Vagina (tissue), 2 donors: ENCODE measurements at regions of chr20 and their contacts with region 1.

Region 1: DNA sequence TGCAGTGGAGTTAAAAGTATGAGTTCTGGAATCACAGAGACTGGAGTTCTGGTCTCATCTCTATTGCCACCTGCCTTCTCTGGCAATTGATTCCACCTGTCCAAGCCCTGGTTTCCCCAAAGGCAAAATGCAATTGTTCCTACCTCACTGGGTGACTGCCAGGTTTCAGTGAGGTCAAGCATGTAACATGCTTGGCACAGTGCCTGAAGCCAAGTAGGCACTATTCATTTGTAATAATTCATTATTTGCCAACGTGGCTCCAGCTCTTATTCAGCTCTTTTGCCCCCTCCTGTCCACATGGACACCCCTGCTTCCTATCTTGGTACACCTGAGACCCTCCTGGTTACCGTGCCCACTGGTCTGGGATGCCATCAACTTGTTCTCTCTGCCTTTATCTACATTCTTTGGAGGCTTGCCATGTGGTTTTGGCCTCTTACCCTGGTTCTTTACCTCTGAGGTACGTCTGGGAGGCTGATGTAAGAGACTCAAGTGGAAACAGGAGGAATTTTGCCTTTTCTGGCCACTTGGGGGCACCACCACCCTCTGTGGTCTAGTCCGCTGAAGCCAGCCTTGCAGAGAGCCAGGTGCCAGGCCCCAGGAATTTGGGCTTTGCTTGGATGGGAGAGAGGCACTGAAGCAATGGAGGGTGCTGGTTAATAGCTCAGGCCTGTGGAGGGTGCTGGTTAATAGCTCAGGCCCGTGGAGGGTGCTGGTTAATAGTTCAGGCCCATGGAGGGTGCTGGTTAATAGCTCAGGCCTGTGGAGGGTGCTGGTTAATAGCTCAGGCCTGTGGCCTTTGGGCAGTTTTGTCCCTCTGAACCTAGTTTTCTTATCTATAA is 1.7 kb downstream of the KCNK15 start:
- DNase-seq: no peak
- H3K4me3 ChIP-seq: no peak overlapping the region
- H3K27ac ChIP-seq: no peak overlapping the region
- H3K4me1 ChIP-seq: peaks cover 27% of the 10 kb centered on the region
- H3K27me3 ChIP-seq: no peaks in the 10 kb centered on the region
- CTCF ChIP-seq: peak in 2 of 3 experiments; percentile 55 to 71
- POLR2A ChIP-seq: no peak

Region 2: DNA sequence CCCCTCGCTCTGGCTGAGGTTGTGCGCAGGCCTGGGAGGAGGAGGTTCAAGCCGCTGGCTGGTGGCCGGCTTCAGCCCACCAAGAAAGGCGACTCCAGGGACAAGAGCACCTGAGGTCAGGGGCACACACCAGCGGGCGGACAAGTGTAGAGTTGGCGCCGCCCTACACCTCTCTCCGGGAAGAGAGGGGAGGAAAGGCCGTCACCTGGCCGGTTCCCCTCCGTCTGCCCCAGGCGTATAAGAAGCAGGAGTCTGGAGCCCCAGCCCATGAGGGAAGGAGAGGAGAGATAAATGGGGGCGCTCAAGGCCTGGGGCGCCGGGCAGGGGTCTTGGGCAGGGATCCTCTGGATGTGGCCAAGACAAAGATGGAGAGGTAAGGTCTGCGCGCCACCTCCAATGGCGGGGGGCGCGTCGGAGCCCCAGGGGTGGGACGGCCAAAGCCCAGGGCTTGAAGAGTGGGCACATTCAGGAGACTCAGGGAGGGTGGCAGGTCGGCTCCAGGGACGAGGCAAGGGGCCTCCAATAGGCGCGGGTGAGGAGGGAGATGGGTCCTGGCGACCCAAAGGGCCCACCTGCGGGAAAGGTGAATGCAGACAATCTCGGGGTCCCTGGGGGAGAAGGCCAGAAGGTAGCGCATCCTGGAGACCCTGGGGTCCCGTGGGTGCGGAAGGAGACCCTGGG is 62.1 kb after region 1 on chr20:
- intact Hi-C with region 1: loop called (anchors 2 kb)
- DNase-seq: no peak
- H3K4me3 ChIP-seq: peak overlapping the region; percentile 39 to 45
- H3K27ac ChIP-seq: peak overlapping the region; percentile 68
- H3K4me1 ChIP-seq: peaks cover 5% of the 10 kb centered on the region
- H3K27me3 ChIP-seq: peaks cover 5% of the 10 kb centered on the region
- CTCF ChIP-seq: no peak
- POLR2A ChIP-seq: no peak

Region 3: DNA sequence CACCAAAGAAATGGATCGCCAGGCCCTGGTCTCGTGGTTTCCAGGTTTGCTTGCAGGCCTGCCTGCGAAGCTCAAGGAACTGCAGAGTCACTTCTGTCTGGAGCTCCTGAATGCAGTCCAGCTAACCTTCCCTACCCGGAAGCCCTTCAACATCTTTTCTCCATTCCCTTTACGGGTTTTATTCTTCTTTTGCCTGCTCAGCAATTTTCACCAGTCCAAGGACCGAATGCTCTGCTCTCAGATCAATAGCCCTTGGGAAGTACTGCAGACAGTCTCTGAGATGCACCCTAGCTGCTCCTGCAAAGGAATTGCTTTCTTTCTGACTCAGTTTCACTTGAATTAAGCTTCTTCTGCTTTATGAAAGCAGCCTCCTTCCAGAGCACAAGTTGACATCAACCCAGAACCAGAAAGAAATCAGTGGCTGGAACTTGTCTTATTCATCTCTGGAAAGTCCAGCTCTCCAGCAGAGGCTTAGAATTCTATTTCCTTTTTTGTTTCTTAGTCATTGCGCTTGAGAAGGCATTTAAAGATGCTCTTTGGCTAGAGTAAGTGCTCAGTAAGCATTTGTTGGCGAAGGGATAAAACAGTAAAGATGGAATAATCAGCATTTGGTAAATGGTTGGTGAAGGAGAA is 119.4 kb after region 1 on chr20:
- intact Hi-C with region 1: loop called (anchors 2 kb)
- DNase-seq: no peak
- H3K4me3 ChIP-seq: no peak overlapping the region
- H3K27ac ChIP-seq: no peak overlapping the region
- H3K4me1 ChIP-seq: peaks cover 17% of the 10 kb centered on the region
- H3K27me3 ChIP-seq: no peaks in the 10 kb centered on the region
- CTCF ChIP-seq: no peak
- POLR2A ChIP-seq: no peak